ENCODE measurements at regions of chr11 and their contacts with region 1.

Region 1: DNA sequence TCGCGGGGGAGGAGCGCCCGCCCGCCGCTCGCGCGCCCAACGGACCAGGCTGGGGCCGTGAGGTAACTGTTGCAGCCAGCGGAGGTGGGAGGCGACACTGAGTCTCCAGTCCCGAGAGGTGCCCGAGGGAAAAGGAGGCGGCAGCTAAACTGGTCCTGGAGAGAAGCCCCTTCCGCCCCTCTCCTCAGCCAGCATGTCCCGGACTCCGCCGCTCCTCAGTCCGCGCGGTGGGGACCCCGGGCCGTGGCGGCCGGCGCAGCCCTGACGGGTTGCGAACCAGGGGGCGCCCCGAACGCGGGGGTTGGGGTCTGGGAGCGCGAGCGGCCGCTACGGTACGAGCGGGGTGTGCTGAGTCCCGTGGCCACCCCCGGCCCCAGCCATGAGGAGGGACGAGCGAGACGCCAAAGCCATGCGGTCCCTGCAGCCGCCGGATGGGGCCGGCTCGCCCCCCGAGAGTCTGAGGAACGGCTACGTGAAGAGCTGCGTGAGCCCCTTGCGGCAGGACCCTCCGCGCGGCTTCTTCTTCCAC is at the start of gene PDE3B:
- DNase-seq: peak; percentile 36 to 90
- H3K4me3 ChIP-seq: peak within 1 kb of the TSS; percentile 77 to 83
- H3K27ac ChIP-seq: peak within 1 kb of the TSS; percentile 84 to 87
- H3K4me1 ChIP-seq: peaks cover 7 to 8% of the 10 kb centered on the region in 2 donors
- H3K27me3 ChIP-seq: no peaks in the 10 kb centered on the region
- CTCF ChIP-seq: peak in 1 of 3 experiments; percentile 6
- total RNA-seq, gene PDE3B: 5.1 TPM

Region 2: GRCh38 chr11:14519917-14520746 is 123.6 kb before region 1 on chr11 and contains the start of gene PSMA1:
- intact Hi-C with region 1: loop called (anchors 5 kb)
- DNase-seq: peak; percentile 82 to 98
- H3K4me3 ChIP-seq: peak within 1 kb of the TSS; percentile 85 to 91
- H3K27ac ChIP-seq: peak within 1 kb of the TSS; percentile 86 to 89
- H3K4me1 ChIP-seq: peaks cover 6 to 17% of the 10 kb centered on the region in 2 donors
- H3K27me3 ChIP-seq: no peaks in the 10 kb centered on the region
- CTCF ChIP-seq: peak; percentile 22 to 62 (median 45)
- total RNA-seq, gene PSMA1: 42.5 TPM

Region 3: GRCh38 chr11:14537134-14537599 is 106.6 kb before region 1 on chr11:
- intact Hi-C with region 1: loop called (anchors 1 kb)
- DNase-seq: no peak
- H3K4me3 ChIP-seq: no peak overlapping the region
- H3K27ac ChIP-seq: peak overlapping the region; percentile 85 to 90
- H3K4me1 ChIP-seq: peaks cover 3 to 30% of the 10 kb centered on the region in 2 donors
- H3K27me3 ChIP-seq: no peaks in the 10 kb centered on the region
- CTCF ChIP-seq: peak; percentile 27 to 87 (median 79)

Region 4: GRCh38 chr11:14583252-14584034 is 60.3 kb before region 1 on chr11:
- intact Hi-C with region 1: loop called (anchors 2 kb)
- DNase-seq: peak in 1 of 2 donors; percentile 65
- H3K4me3 ChIP-seq: no peak overlapping the region
- H3K27ac ChIP-seq: peak overlapping the region; percentile 40 to 54
- H3K4me1 ChIP-seq: no peaks in the 10 kb centered on the region
- H3K27me3 ChIP-seq: no peaks in the 10 kb centered on the region
- CTCF ChIP-seq: no peak

Region 5: GRCh38 chr11:14892036-14892567 is 248.3 kb after region 1 on chr11 and contains the start of gene CYP2R1:
- intact Hi-C with region 1: loop called (anchors 5 kb)
- DNase-seq: peak; percentile 88 to 98
- H3K4me3 ChIP-seq: peak within 1 kb of the TSS; percentile 82
- H3K27ac ChIP-seq: peak within 1 kb of the TSS; percentile 90 to 95
- H3K4me1 ChIP-seq: peaks cover 0 to 16% of the 10 kb centered on the region in 2 donors
- H3K27me3 ChIP-seq: no peaks in the 10 kb centered on the region
- CTCF ChIP-seq: peak in 1 of 3 experiments; percentile 3
- total RNA-seq, gene CYP2R1: 40.1 TPM

Measured in ascending aorta (tissue), 2 donors.